ENCODE measurements at regions of chr22 and their contacts with region 1.

Region 1: GRCh38 chr22:42369245-42370041 is 62.8 kb downstream of the NFAM1 start:
- DNase-seq: peak; percentile 71
- ATAC-seq: peak; percentile 99
- H3K4me3 ChIP-seq: peak overlapping the region; percentile 81
- H3K27ac ChIP-seq: no peak overlapping the region
- H3K4me1 ChIP-seq: peaks cover 12% of the 10 kb centered on the region
- H3K27me3 ChIP-seq: peaks cover 15 to 20% of the 10 kb centered on the region in 2 experiments; a peak in 3 of 4 replicates
- CTCF ChIP-seq: no peak
- EP300 ChIP-seq: no peak
- POLR2A ChIP-seq: peak; percentile 61
- RAD21 ChIP-seq: no peak

Region 2: GRCh38 chr22:42270512-42271417 is 98.7 kb before region 1 on chr22 and contains the start of gene TCF20:
- CTCF ChIA-PET with region 1: no interaction called
- POLR2A ChIA-PET with region 1: no interaction called
- RAD21 ChIA-PET with region 1: no interaction called
- SMC1A ChIA-PET with region 1: no interaction called
- in situ Hi-C with region 1: no loop called
- intact Hi-C with region 1: no loop called
- DNase-seq: no peak
- ATAC-seq: peak; percentile 73
- H3K4me3 ChIP-seq: peak within 1 kb of the TSS; percentile 97
- H3K27ac ChIP-seq: peak within 1 kb of the TSS; percentile 81
- H3K4me1 ChIP-seq: peaks cover 8% of the 10 kb centered on the region; the same call in 1 of the 2 replicates
- H3K27me3 ChIP-seq: no peaks in the 10 kb centered on the region
- CTCF ChIP-seq: no peak
- EP300 ChIP-seq: no peak
- POLR2A ChIP-seq: peak; percentile 68
- RAD21 ChIP-seq: no peak
- polyA plus RNA-seq, gene TCF20: 0.69 to 0.89 TPM

Region 3: DNA sequence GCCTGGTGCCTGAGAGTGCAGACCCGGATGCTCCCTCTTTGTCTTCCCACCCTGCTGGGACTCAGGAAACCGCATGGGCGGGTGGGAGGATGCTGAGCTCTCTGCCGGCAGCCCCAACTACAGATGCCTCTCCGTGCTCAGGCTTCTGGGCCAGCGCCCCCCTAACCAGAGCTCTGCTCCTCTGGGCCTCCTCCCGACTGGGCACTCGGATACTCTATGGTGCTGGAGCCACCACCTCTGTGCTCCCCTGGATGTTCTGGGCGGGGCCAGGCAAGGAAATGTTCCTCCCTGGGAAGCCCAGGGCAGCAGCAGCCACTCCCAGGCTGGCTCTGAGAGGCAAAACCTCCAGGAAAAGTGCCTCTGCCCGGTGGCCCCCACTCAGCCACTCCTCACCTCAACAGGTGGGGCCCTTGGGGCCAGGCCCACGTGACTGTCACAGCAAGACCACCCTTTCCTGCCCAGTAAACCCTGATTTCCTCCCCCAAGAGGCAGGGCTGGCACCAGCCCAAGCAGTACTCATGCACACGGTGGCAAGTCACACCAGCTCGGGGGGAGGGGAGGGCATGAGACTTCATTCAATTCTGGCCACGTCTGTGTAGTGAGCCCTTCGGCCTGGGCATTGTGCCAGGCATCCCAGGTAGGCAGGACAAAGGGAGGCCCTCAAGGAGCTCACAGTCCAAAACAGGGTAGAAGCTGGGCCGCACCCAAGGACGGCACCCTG is 44.3 kb before region 1 on chr22:
- CTCF ChIA-PET with region 1: no interaction called
- POLR2A ChIA-PET with region 1: interaction called, 3 read pairs
- RAD21 ChIA-PET with region 1: no interaction called
- SMC1A ChIA-PET with region 1: no interaction called
- in situ Hi-C with region 1: no loop called
- intact Hi-C with region 1: loop called (anchors 5 kb)
- DNase-seq: no peak
- ATAC-seq: no peak; the same call in 2 of the 3 replicates
- H3K4me3 ChIP-seq: no peak overlapping the region
- H3K27ac ChIP-seq: no peak overlapping the region
- H3K4me1 ChIP-seq: peaks cover 5% of the 10 kb centered on the region
- H3K27me3 ChIP-seq: no peaks in the 10 kb centered on the region
- CTCF ChIP-seq: no peak
- EP300 ChIP-seq: no peak
- POLR2A ChIP-seq: no peak
- RAD21 ChIP-seq: no peak

Region 4: GRCh38 chr22:42419243-42419881 is 49.9 kb after region 1 on chr22:
- CTCF ChIA-PET with region 1: no interaction called
- POLR2A ChIA-PET with region 1: interaction called, 3 read pairs
- RAD21 ChIA-PET with region 1: interaction called, 3 read pairs
- SMC1A ChIA-PET with region 1: interaction called, 4 read pairs
- in situ Hi-C with region 1: no loop called
- intact Hi-C with region 1: loop called (anchors 5 kb)
- DNase-seq: peak; percentile 72
- ATAC-seq: peak; percentile 92
- H3K4me3 ChIP-seq: peak overlapping the region; percentile 36; the same call in 1 of the 2 replicates
- H3K27ac ChIP-seq: peak overlapping the region; percentile 80
- H3K4me1 ChIP-seq: peaks cover 27% of the 10 kb centered on the region
- H3K27me3 ChIP-seq: no peaks in the 10 kb centered on the region
- CTCF ChIP-seq: no peak; a peak in 1 of 6 replicates
- EP300 ChIP-seq: peak; percentile 64 to 74; a peak in 3 of 4 replicates
- POLR2A ChIP-seq: peak; percentile 60
- RAD21 ChIP-seq: no peak